Activated naive CD4-positive, alpha-beta T cell treated with anti-CD3 and anti-CD28 coated beads for 36 hours (primary cell): ENCODE measurements at regions of chr4 and their contacts with region 1.

Region 1: GRCh38 chr4:83535520-83536361 is at the start of gene GPAT3:
- DNase-seq: peak; percentile 83
- H3K4me3 Mint-ChIP-seq: peak within 1 kb of the TSS; percentile 73
- H3K27ac Mint-ChIP-seq: peak within 1 kb of the TSS; percentile 15
- H3K4me1 Mint-ChIP-seq: peaks cover 14% of the 10 kb centered on the region
- H3K27me3 Mint-ChIP-seq: peaks cover 2% of the 10 kb centered on the region
- total RNA-seq, gene GPAT3: 2.0 to 3.1 TPM

Region 2: GRCh38 chr4:82913305-82913704 is 622.4 kb before region 1 on chr4:
- CTCF ChIA-PET with region 1: no interaction called
- intact Hi-C with region 1: no loop called
- DNase-seq: no peak
- H3K4me3 Mint-ChIP-seq: no peak overlapping the region
- H3K27ac Mint-ChIP-seq: no peak overlapping the region
- H3K4me1 Mint-ChIP-seq: no peaks in the 10 kb centered on the region
- H3K27me3 Mint-ChIP-seq: no peaks in the 10 kb centered on the region

Region 3: DNA sequence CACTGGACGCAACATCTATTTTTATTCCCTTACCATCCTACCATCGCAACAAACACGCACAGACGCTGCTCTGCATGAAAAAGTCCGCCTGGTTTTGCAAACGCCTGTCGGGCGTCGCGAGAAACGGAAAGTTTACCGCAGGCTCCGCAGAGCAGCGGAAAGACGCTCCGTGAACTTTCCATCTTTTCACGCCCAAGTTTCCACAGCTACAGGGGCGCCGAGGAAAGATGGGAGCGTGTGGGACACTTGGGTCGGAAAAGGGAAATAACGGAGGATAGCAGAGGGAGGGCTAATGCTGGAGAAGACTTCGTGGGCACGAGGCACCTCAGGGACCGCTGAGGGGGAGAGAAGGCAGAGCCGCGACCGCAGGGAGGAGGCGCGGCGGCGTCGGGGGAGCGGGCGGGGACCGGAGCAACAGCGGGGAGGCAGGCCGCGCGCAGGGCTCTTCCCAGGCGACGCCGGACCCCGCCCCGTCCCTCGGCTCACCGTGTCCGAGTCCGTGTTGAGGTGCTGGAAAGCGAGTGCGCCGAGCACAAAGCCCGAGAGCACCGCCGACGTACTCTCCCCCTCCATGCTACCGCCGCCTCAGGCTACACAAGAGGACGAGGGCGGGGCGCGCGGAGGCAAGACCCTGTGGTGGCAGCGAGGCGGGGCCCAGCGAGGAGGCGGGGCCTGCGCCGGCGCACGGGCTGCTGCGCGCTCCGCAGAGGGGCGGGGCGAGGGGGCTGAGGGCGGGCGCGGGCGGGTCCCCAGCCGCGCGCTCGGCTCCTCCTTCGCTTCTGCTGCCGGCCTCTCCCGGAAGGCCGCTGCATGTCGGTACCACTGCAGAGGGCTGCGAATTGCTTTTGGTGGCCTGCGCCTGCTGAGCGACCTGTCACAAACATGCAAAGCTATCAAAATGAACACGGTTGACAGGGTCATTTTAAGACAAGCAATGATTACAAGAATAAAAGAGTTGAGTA is 51.0 kb before region 1 on chr4 and contains the start of gene ABRAXAS1:
- CTCF ChIA-PET with region 1: interaction called, 3 read pairs
- intact Hi-C with region 1: loop called (anchors 1 kb)
- DNase-seq: peak; percentile 92
- H3K4me3 Mint-ChIP-seq: peak within 1 kb of the TSS; percentile 99
- H3K27ac Mint-ChIP-seq: peak within 1 kb of the TSS; percentile 91
- H3K4me1 Mint-ChIP-seq: peaks cover 19% of the 10 kb centered on the region
- H3K27me3 Mint-ChIP-seq: no peaks in the 10 kb centered on the region
- total RNA-seq, gene ABRAXAS1: 19.7 to 20.9 TPM

Region 4: DNA sequence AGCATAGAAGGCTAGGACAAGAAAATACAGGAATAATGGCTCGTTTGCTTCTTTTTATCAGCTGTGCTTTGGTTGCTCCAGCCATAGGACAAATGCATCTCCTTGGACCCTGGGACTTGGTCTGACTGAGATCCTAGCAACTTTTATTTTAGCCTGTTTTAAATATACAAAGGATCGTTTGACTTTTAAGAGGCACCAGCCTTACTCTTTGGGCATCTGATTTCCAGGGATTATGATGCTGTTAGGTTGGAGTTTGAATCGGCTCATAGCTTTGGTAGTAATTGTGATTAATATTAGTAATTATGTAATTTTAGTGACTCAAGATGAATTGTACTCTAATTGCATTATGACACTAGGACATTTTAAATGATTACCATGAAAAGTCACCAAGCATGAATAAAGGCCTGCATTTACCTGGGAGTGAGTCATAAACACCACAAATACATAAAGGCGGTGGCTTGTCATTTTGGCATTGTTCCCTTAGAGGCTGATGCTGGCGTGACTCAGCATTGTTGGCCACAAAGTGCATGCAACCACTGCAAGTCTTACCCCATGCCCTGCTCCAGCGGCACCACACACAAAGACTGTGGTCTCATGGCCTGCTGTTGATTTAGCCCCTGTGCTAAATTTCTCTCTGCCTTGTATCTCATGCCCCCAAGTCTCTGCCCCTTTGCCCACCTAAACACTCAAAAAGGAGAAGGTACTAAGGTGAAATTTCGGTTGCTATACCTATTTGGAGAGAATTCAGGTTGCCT is 12.6 kb after region 1 on chr4:
- CTCF ChIA-PET with region 1: interaction called, 3 read pairs
- intact Hi-C with region 1: loop called (anchors 1 kb)
- DNase-seq: peak; percentile 82
- H3K4me3 Mint-ChIP-seq: no peak overlapping the region
- H3K27ac Mint-ChIP-seq: no peak overlapping the region
- H3K4me1 Mint-ChIP-seq: peaks cover 3% of the 10 kb centered on the region
- H3K27me3 Mint-ChIP-seq: no peaks in the 10 kb centered on the region